ENCODE measurements at regions of chr14 and their contacts with region 1.

Region 1: GRCh38 chr14:61178226-61179060 is 102.7 kb downstream of the TMEM30B start:
- DNase-seq: peak; percentile 81
- H3K4me3 Mint-ChIP-seq: peak overlapping the region; percentile 55
- H3K27ac Mint-ChIP-seq: peak overlapping the region; percentile 92
- H3K4me1 Mint-ChIP-seq: peaks cover 54% of the 10 kb centered on the region
- H3K27me3 Mint-ChIP-seq: no peaks in the 10 kb centered on the region

Region 2: DNA sequence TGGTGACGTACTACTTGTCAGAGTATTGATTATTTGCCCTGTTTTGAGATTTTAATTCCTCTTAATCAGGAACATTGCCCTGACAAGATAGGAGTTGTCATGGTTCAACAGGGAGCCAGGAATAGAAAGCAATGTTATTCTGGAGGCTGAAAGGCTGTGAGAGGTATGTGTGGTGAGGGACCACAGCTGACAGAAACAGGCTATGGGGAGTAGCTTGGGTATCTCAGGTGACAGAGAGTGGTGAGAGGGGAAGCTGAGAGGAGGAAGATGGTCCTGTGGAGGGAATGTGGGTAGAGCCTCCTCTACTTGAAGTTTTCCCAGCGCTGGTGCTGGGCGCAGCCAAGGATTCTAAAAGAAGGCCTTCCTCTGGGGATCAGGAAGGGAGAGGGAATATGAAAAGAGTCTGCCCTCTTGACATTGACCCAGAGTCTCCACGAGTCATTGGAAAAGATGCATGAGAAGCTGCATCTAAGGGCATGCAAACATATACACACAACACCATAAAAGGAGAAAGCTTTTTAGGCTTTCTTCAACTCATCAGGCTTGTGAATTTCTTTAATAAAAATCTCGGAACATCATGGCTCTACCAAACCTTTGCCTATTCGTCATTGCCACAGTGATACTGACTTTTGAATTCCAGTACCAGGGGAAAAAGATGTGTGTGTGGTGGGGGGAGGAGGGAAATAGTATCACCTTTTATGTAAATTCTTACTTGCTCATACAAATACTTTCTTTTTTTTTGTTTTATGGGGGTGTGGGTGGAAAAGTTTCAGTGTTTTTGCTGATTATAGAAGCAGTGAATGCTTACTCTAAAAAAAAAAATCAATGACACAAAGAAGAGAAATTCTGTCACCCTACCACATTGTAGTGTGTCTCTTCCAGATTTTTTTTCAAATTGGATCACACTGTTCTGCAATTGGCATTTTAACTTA is 973.3 kb before region 1 on chr14:
- CTCF ChIA-PET with region 1: no interaction called
- POLR2A ChIA-PET with region 1: no interaction called
- intact Hi-C with region 1: loop called (anchors 5 kb)
- DNase-seq: no peak
- H3K4me3 Mint-ChIP-seq: no peak overlapping the region
- H3K27ac Mint-ChIP-seq: no peak overlapping the region
- H3K4me1 Mint-ChIP-seq: peaks cover 20% of the 10 kb centered on the region
- H3K27me3 Mint-ChIP-seq: peaks cover 20% of the 10 kb centered on the region

Region 3: DNA sequence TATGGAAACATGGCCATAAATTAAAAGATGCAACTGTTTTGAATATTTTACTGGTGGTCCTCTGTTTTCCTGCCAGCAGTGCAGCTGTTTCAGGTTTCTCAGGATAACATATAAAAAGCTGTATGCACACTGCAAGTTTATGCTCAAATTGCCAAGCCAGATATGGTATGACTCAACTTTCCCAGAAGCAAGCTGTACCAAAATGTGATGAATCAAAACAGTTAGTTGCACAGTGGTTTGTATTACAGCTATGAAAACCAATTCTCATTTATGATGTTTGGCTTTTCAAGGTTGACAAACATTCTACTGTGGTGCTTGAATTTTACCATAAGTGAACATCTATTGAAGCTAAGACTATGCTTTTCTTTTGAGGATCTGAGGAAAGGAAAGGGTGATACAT is 213.0 kb before region 1 on chr14:
- CTCF ChIA-PET with region 1: no interaction called
- POLR2A ChIA-PET with region 1: no interaction called
- intact Hi-C with region 1: loop called (anchors 1 kb)
- DNase-seq: no peak
- H3K4me3 Mint-ChIP-seq: no peak overlapping the region
- H3K27ac Mint-ChIP-seq: peak overlapping the region; percentile 39
- H3K4me1 Mint-ChIP-seq: peaks cover 8% of the 10 kb centered on the region
- H3K27me3 Mint-ChIP-seq: no peaks in the 10 kb centered on the region

Region 4: DNA sequence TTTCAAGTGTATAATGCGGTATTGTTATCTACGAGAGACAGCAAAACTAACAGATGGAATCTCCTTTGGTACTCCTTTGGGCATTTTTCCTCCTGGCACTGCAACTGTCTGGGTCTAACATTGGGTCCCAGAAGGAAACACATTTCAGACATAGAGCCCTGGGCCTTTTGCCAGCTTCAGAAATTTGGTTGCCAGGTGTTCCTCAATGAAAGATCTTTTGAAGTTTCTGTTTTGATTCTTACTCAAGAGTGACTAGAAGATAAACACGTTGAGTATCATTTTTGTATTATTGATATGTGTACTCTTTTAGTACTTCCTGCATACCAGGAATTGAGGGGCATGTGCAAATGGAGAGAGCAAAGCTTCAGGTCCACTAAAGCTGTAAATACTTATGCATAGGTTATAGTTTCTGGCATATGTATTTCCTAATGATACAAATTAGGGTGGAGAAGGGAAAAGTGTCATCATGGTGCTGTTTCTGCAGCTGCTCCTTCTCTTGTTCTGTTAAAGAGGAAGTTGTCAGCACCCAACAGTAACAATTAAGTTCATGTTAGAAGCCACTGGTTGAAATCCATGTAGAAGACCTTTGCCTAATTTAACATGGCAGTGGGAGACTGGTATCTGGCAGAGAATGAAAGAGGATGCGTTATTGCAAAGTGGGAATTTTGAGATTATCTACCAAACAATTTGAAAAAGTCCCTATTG is 143.9 kb before region 1 on chr14:
- CTCF ChIA-PET with region 1: no interaction called
- POLR2A ChIA-PET with region 1: interaction called, 5 read pairs
- intact Hi-C with region 1: loop called (anchors 5 kb)
- DNase-seq: peak; percentile 36
- H3K4me3 Mint-ChIP-seq: no peak overlapping the region
- H3K27ac Mint-ChIP-seq: no peak overlapping the region
- H3K4me1 Mint-ChIP-seq: peaks cover 8% of the 10 kb centered on the region
- H3K27me3 Mint-ChIP-seq: no peaks in the 10 kb centered on the region

Region 5: DNA sequence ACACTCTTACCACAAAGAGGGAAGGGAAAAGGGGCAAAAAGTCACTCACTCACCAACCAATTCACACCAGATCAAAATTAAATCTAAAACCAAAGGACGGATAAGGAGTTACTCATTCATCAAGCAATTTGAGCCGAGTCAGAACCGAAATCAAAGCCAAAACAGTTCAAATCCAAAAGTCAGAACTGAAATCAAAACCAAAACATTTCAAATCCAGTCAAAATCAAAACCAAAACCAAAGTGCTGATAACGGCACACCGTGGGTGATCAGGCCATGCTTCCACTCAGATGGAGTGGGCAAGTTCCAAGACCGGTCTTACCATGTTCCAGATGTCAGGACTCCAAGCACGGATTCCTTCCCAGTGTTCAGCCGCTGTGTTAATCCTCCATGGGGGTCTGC is 57.9 kb before region 1 on chr14:
- CTCF ChIA-PET with region 1: no interaction called
- POLR2A ChIA-PET with region 1: no interaction called
- intact Hi-C with region 1: loop called (anchors 1 kb)
- DNase-seq: peak; percentile 42
- H3K4me3 Mint-ChIP-seq: no peak overlapping the region
- H3K27ac Mint-ChIP-seq: no peak overlapping the region
- H3K4me1 Mint-ChIP-seq: peaks cover 12% of the 10 kb centered on the region
- H3K27me3 Mint-ChIP-seq: no peaks in the 10 kb centered on the region

Region 6: DNA sequence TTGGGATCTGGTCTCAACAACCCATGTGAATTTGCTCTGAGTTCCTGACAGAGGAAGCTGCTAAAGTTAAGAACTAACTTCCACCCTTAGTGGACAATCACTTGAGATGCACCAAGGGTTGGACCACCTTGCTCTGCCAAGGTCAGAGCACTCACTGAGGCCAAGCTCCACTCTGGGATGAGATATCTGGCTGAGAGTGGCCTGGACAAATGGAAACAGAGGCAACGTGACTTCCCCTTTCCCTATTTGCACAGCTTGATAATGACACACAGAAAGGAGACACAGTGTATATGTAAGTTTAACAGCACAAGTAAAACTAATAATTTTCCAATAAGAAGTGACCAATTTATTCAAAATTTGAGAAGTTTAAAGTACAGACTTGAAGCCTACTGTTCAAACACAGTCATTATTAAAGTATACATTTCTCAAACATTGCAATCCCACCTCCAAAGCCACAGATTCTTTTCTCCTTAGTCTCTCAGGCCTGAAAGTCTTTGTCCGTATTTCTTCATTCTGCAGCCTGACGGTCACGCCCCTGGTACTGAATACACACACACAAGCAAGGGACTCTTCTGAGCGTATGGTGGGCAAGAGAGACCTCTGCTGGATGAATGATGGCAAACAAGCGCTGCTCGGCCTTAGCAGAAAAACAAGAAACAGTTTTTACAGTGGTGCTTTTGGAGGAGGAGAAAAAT is 74.1 kb after region 1 on chr14:
- CTCF ChIA-PET with region 1: no interaction called
- POLR2A ChIA-PET with region 1: no interaction called
- intact Hi-C with region 1: loop called (anchors 5 kb)
- DNase-seq: peak; percentile 76
- H3K4me3 Mint-ChIP-seq: no peak overlapping the region
- H3K27ac Mint-ChIP-seq: no peak overlapping the region
- H3K4me1 Mint-ChIP-seq: peaks cover 8% of the 10 kb centered on the region
- H3K27me3 Mint-ChIP-seq: peaks cover 9% of the 10 kb centered on the region